Right cardiac atrium (tissue), 5 donors: ENCODE measurements at regions of chr15 and their contacts with region 1.

Region 1: GRCh38 chr15:39966521-39966920 is 32.6 kb downstream of the EIF2AK4 start:
- DNase-seq: no peak
- ATAC-seq: no peak
- H3K4me3 ChIP-seq: no peak overlapping the region
- H3K27ac ChIP-seq: no peak overlapping the region
- H3K4me1 ChIP-seq: no peaks in the 10 kb centered on the region
- H3K27me3 ChIP-seq: no peaks in the 10 kb centered on the region

Region 2: DNA sequence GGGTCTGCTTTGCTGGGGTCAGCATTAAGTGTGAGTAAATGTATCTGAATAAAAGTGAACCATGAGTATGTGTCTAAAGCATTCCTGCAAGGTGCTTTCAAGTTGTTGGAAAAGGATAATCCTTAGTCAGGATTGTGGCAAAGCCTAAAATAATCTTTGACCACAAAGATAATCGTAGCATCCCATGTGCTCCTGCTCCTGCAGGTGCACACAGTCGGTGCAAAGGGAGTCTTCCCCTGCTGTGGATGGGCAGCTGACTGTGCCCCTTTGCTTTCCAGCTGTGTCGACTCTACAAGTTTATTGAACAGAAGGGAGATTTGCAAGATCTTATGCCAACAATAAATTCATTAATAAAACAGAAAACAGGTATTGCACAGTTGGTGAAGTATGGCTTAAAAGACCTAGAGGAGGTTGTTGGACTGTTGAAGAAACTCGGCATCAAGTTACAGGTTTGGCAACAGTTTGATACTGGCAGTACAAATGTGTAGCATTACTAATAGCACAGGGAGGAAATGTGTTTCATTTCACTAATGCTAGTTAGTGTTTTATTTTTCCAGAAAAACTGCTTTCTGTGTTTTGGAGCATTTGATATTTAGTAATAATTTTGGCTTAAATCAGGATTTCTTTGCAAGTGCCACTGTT is 49.8 kb after region 1 on chr15:
- intact Hi-C with region 1: loop called in 1 of 4 experiments (anchors 5 kb)
- DNase-seq: no peak
- ATAC-seq: no peak
- H3K4me3 ChIP-seq: no peak overlapping the region
- H3K27ac ChIP-seq: no peak overlapping the region
- H3K4me1 ChIP-seq: no peaks in the 10 kb centered on the region
- H3K27me3 ChIP-seq: no peaks in the 10 kb centered on the region